PC-9 (cell line): ENCODE measurements at regions of chr5 and their contacts with region 1.

Region 1: DNA sequence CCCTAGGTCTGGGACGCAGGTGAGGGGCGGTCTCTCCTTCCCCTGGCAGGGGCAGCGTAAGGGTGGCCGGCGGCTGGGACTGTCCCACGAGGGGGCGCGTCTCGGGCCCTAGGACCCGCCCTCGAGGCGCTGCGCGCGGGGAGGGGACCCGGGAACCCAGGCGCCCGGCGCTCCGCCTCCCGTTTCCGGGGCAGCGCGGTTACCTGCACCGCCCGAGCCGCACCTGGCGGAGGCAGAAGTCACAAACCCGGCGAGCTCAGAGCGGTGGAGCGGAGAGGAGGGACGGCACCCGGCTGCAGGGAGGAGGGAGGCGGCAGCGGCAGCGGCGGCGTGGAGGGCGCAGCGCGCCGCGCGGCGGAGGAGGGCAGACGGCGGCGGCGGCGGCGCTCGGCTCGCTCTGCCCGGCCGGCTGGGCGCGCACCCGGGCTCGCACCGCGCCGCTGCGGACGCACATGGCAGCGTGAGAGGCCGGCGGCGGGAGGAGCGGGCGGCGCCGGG is at the start of gene WWC1:
- DNase-seq: peak; percentile 82 to 99
- H3K4me3 ChIP-seq: peak within 1 kb of the TSS; percentile 63
- H3K27ac ChIP-seq: peak within 1 kb of the TSS; percentile 91
- H3K4me1 ChIP-seq: peaks cover 76% of the 10 kb centered on the region
- H3K27me3 ChIP-seq: no peaks in the 10 kb centered on the region
- CTCF ChIP-seq: peak; percentile 68
- total RNA-seq, gene WWC1: 79.5 and 97.7 TPM in 2 replicates

Region 2: GRCh38 chr5:167699434-167699833 is 592.1 kb before region 1 on chr5:
- CTCF ChIA-PET with region 1: interaction called, 16 read pairs
- POLR2A ChIA-PET with region 1: no interaction called
- intact Hi-C with region 1: no loop called
- DNase-seq: peak; percentile 79 to 100
- H3K4me3 ChIP-seq: no peak overlapping the region
- H3K27ac ChIP-seq: peak overlapping the region; percentile 97
- H3K4me1 ChIP-seq: peaks cover 40% of the 10 kb centered on the region
- H3K27me3 ChIP-seq: no peaks in the 10 kb centered on the region
- CTCF ChIP-seq: no peak

Region 3: DNA sequence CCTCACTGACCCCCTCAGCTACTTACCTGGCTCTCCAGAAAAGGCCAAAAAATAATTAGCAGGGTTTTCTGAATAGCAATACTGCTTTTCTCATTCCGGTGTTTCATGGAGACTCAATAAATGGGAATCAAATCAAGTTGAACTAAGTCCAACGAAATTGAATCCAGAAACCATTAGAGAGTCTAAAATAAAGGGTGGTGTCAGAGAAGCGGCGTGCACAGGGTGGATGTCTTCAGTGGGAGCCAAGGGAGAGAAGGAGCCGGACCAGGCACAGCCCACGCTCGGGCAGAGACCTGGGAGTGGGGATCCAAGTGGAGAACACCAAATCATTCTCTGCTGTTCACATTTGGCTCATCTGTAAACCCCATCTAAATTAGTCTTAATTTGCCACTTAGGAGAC is 40.3 kb before region 1 on chr5:
- CTCF ChIA-PET with region 1: no interaction called
- POLR2A ChIA-PET with region 1: no interaction called
- intact Hi-C with region 1: no loop called
- DNase-seq: no peak
- H3K4me3 ChIP-seq: no peak overlapping the region
- H3K27ac ChIP-seq: no peak overlapping the region
- H3K4me1 ChIP-seq: no peaks in the 10 kb centered on the region
- H3K27me3 ChIP-seq: peaks cover 50% of the 10 kb centered on the region; the same call in 1 of the 2 replicates
- CTCF ChIP-seq: no peak

Region 4: DNA sequence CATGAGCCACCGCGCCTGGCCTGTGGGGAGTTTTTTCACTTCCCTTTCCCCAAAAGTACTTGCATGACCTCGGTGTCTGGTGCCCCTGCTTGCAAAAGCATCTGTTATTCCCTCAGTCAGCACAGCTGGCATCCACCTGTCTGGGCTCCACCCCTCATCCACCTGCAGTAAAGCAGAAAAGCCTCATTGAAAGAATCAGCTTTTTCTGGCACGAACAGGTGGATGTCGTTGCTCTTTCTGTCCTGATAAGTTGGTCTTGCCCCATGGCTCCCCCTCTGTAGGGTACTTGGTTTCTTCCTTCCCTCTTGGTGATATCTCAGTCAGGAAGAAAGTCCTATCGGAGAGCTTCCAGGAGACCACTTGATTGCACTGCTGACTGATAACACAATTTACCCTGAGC is 37.3 kb after region 1 on chr5:
- CTCF ChIA-PET with region 1: interaction called, 5 read pairs
- POLR2A ChIA-PET with region 1: interaction called, 5 read pairs
- intact Hi-C with region 1: loop called (anchors 1 kb)
- DNase-seq: peak in 1 of 2 experiments; percentile 65
- H3K4me3 ChIP-seq: peak overlapping the region; percentile 39; the same call in 1 of the 2 replicates
- H3K27ac ChIP-seq: peak overlapping the region; percentile 78
- H3K4me1 ChIP-seq: peaks cover 99% of the 10 kb centered on the region
- H3K27me3 ChIP-seq: no peaks in the 10 kb centered on the region
- CTCF ChIP-seq: no peak

Region 5: DNA sequence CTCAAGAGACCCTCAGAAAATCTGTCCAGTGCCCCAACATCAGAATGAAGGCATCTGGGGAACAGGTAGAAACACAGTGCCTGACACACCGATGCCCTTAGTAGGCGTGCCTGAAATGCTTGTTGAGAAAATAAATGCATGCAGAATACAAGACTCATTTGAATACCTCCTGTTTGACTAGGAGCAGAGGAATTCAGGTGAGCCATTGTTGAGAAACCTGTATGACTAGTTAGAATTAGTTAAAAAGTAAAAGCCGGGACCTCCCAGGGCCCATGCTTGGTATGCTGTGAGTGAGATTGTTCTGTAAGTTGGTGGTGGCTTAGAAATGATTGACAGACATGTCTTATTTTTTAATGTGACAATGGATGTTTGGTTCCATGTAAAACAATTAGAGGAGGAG is 54.9 kb after region 1 on chr5:
- CTCF ChIA-PET with region 1: interaction called, 7 read pairs
- POLR2A ChIA-PET with region 1: interaction called, 4 read pairs
- intact Hi-C with region 1: loop called (anchors 1 kb)
- DNase-seq: peak; percentile 68 to 96
- H3K4me3 ChIP-seq: peak overlapping the region; percentile 27; the same call in 1 of the 2 replicates
- H3K27ac ChIP-seq: peak overlapping the region; percentile 71
- H3K4me1 ChIP-seq: peaks cover 83% of the 10 kb centered on the region
- H3K27me3 ChIP-seq: no peaks in the 10 kb centered on the region
- CTCF ChIP-seq: no peak

Region 6: DNA sequence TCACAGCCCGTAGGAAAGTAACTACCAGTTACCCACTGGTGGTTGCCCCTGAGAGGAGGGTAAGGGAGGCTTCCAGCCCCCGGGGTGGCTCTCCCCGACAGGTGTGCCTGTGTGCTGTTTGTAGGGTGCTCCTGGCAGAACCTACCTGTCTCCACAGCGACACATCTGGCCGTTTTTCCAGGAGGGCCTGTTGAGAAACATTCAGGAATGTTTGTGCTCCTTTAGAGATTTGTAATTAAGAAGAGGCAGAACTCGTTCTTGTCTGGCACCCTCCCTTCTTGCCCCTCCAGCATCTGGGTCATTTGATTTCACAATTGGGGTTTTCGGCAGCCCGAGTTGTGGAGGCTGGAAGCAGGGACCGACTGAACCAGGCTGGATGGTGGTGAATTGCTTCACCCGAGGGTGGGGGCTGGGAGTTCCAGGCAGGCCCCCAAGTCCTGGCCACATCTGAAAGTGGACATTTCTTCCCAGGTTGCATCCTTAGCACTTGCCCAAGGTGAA is 74.1 kb after region 1 on chr5:
- CTCF ChIA-PET with region 1: interaction called, 6 read pairs
- POLR2A ChIA-PET with region 1: interaction called, 4 read pairs
- intact Hi-C with region 1: loop called (anchors 1 kb)
- DNase-seq: peak; percentile 88 to 98
- H3K4me3 ChIP-seq: peak overlapping the region; percentile 38; the same call in 1 of the 2 replicates
- H3K27ac ChIP-seq: peak overlapping the region; percentile 97
- H3K4me1 ChIP-seq: peaks cover 76% of the 10 kb centered on the region
- H3K27me3 ChIP-seq: no peaks in the 10 kb centered on the region
- CTCF ChIP-seq: peak; percentile 69

Region 7: GRCh38 chr5:168486136-168486879 is 194.8 kb after region 1 on chr5 and contains the start of gene RARS1:
- CTCF ChIA-PET with region 1: interaction called, 3 read pairs
- POLR2A ChIA-PET with region 1: no interaction called
- intact Hi-C with region 1: loop called (anchors 5 kb)
- DNase-seq: peak; percentile 86 to 94
- H3K4me3 ChIP-seq: peak within 1 kb of the TSS; percentile 83
- H3K27ac ChIP-seq: peak within 1 kb of the TSS; percentile 35; the same call in 1 of the 2 replicates
- H3K4me1 ChIP-seq: peaks cover 11% of the 10 kb centered on the region
- H3K27me3 ChIP-seq: no peaks in the 10 kb centered on the region
- CTCF ChIP-seq: peak; percentile 88
- total RNA-seq, gene RARS1: 101 and 125 TPM in 2 replicates

Region 8: DNA sequence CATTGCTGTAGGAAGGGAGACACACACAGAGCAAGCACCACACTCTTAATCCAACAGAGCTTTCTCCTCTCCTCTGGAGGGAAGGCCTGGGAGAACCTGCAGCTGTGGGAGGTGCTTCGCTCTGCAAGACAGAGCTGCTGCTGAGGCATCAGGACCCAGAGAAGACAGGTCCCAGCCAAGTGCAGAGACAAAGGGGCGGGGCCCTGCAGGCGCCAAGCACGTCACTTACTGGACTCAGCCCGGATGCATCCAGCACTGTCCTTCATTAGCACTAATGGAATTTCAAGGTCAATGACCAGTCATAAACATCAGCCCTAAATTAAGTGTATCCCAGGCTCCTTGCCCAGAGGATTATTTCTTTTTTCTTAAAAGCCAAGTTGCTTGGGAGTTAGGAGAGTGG is 624.8 kb after region 1 on chr5:
- CTCF ChIA-PET with region 1: no interaction called
- POLR2A ChIA-PET with region 1: no interaction called
- intact Hi-C with region 1: no loop called
- DNase-seq: no peak
- H3K4me3 ChIP-seq: no peak overlapping the region
- H3K27ac ChIP-seq: no peak overlapping the region
- H3K4me1 ChIP-seq: no peaks in the 10 kb centered on the region
- H3K27me3 ChIP-seq: peaks cover 92% of the 10 kb centered on the region
- CTCF ChIP-seq: no peak